ENCODE measurements at regions of chr10 and their contacts with region 1.

Region 1: DNA sequence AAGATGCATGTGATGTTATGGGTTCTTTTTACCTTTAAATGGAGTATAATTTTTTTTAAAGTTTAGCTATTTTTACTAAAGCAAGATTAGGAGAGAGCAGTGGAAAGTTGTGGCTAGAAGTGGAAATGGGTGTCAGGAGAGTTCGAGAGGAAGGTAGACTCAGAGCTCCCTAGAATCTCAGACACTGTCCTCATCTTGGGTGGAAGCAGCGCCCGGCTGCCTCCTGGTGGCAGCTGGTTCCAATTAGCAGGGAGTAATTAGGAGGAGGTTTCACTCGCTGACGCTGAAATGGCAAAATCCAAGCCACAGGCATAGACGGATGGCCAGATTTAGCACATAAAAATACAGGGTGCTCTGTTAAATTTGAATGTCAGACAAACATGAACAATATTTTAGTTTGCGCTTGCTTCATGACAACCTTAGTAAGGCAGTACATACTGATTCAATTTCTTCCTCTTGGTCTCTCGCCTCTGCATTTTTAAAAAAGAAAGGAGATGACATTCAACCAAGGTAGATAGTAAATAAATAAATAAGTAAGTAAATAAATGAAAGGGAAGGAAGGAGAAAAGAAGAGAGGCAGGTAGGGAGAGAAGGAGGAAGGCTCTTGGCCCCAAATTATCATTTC is 58.5 kb downstream of the LGI1 start:
- DNase-seq: peak in 5 of 6 donors; percentile 21 to 71 (median 44)
- ATAC-seq: peak; percentile 50 to 92 (median 82)
- H3K4me3 ChIP-seq: no peak overlapping the region
- H3K27ac ChIP-seq: no peak overlapping the region
- H3K4me1 ChIP-seq: no peaks in the 10 kb centered on the region
- H3K27me3 ChIP-seq: no peaks in the 10 kb centered on the region
- CTCF ChIP-seq: peak in 3 of 4 donors; percentile 40 to 48 (median 45)

Region 2: GRCh38 chr10:93867525-93867924 is 51.3 kb after region 1 on chr10:
- intact Hi-C with region 1: loop called in 1 of 3 experiments (anchors 10 kb)
- DNase-seq: no peak
- ATAC-seq: no peak
- H3K4me3 ChIP-seq: no peak overlapping the region
- H3K27ac ChIP-seq: no peak overlapping the region
- H3K4me1 ChIP-seq: no peaks in the 10 kb centered on the region
- H3K27me3 ChIP-seq: no peaks in the 10 kb centered on the region
- CTCF ChIP-seq: no peak